Cardiac septum (tissue), 1 donor: ENCODE measurements at regions of chr2 and their contacts with region 1.

Region 1: DNA sequence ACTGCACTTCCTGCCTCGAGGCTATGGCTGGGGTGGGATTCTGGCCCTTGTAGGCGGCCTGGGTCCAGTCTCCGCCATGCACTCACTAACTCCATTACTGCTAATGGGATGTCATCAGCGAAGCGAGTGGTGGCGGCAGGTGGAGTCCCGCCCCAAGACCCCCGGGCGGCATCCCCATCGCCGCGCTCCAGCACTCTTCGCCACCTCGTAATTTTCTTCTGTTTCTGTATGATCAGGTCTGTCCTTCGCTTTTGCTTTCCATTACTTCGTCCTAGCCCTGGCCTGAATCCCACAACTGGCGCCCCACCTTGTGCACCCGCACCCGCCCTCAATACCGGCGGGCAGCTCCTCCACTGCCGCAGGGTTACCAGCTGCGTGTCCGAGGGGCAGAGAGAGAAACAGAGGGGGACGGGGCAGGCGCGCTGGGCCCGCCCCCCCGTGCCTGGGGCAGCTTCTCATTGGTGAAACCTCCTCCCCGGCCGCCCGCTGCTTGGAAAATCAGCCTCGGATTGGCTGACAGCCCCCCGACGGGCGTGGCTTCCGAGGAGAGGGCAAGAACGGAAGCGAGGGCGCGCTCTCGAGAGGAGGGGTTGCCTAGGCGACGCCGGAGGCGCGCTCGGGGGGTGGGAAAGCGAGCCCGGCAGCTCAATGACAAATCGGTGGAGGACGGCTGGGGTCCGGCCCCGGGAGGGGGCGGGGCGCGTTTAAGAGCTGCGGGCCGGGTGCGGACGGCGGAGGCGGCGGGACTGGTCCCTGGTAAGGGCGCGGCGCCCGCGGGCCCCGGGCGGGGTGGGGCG is at the start of gene RALB:
- DNase-seq: peak; percentile 100
- total RNA-seq, gene RALB: 49.9 TPM

Region 2: GRCh38 chr2:120223034-120223912 is 29.1 kb before region 1 on chr2 and contains the start of gene TMEM185B:
- intact Hi-C with region 1: loop called (anchors 1 kb)
- DNase-seq: peak; percentile 98
- total RNA-seq, gene TMEM185B: 22.7 TPM

Region 3: DNA sequence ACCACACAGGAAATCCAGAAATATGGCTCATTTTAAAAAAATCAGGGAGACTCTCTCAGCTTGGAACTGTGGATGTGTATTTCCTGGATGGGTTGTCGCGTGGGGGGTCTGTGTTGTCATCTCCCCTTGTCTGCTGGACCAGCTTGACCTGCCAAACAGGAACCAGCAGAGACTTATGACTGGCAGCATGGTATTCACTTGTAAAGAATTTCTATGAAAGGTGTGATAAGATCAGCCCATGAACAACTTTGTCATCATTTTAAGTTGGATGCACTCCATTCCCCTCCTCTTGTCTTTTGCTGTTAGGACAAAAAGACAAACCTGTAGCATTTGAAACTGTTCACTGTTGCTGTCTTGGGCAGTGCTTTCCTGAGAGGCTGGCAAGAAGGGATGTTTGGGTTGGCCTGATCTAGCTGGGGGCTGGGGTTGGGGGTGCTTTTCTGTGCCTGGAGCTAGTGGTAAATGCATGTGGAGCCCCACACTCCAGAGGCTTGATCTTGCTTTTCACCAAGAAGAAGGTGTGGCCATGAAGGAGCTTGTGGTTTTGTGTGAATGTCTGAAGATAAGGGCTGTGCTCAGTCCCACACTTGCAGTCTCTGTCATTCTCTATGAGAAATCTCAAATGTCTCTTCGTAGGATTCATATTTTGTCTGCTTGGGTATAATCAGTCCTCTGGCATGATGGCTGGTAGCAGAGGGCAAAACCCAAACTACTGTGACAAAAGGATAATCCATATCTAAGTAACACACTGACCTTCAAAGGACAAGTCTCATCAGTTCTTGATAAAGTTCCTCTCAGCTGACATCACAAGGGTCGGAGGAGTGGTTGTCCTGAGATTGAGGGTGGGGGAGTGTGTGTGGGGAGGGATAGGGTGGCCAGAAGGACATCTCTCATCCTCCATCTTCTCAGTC is 39.2 kb after region 1 on chr2:
- intact Hi-C with region 1: loop called (anchors 2 kb)
- DNase-seq: no peak

Region 4: DNA sequence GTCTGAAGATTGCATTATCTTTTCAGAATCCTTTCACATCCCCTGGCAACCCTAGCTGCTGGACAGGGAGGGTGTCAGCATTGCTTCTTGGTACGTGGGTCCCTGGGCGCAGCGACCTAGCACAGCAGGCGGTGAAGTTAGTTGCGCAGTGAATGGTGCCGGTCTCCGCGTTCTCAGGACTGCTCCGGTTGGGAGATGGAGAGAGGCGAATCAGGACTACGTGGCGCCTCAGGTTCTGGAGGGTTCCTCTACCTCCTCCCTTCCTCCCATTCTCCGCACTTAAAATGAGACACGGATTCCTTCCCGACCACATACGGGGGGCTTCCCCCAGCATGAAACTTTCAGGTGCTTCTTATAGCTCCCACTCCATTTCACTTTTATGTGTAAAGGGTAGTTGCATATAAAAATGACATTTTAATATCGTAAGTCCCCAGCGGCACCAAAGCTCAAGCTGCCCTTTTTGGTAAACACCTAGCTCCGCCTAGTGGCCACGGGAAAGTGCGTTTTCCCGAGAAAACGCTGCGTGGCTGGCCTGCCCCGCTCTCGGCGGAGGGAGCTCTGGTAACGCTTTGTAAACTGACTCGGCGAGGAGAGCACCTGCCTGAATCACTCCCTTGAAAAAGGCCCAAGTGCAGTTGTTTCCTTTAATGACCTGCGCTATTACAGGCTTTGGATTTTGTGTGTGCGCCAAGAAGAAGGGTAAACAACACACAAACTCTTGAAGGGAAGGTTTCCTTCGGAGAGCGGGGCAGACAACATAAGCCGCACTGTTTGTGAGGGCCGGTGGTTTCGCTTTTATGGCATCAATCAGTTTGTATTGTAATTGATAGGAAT is 60.7 kb after region 1 on chr2:
- intact Hi-C with region 1: loop called (anchors 10 kb)
- DNase-seq: peak; percentile 92